Right lobe of liver (tissue), 6 donors: ENCODE measurements at regions of chr9 and their contacts with region 1.

Region 1: GRCh38 chr9:71614409-71615010 is 153.8 kb downstream of the CEMIP2 start:
- DNase-seq: no peak
- ATAC-seq: no peak
- H3K4me3 ChIP-seq: no peak overlapping the region
- H3K27ac ChIP-seq: no peak overlapping the region
- H3K4me1 ChIP-seq: no peaks in the 10 kb centered on the region
- H3K27me3 ChIP-seq: no peaks in the 10 kb centered on the region
- CTCF ChIP-seq: no peak
- POLR2A ChIP-seq: no peak

Region 2: GRCh38 chr9:71663931-71664459 is 49.5 kb after region 1 on chr9:
- intact Hi-C with region 1: no loop called
- DNase-seq: no peak
- ATAC-seq: no peak
- H3K4me3 ChIP-seq: no peak overlapping the region
- H3K27ac ChIP-seq: no peak overlapping the region
- H3K4me1 ChIP-seq: no peaks in the 10 kb centered on the region
- H3K27me3 ChIP-seq: no peaks in the 10 kb centered on the region
- CTCF ChIP-seq: no peak
- POLR2A ChIP-seq: no peak

Region 3: GRCh38 chr9:71768388-71769174 is 154.1 kb after region 1 on chr9 and contains the start of gene CEMIP2:
- intact Hi-C with region 1: loop called in 1 of 2 experiments (anchors 10 kb)
- DNase-seq: peak; percentile 94 to 96 (median 96)
- ATAC-seq: peak; percentile 69 to 87 (median 81)
- H3K4me3 ChIP-seq: peak within 1 kb of the TSS; percentile 69 to 91 (median 89)
- H3K27ac ChIP-seq: peak within 1 kb of the TSS; percentile 94 to 99 (median 98)
- H3K4me1 ChIP-seq: peaks cover 0 to 39% (median 11%) of the 10 kb centered on the region in 4 donors
- H3K27me3 ChIP-seq: no peaks in the 10 kb centered on the region
- CTCF ChIP-seq: peak; percentile 26 to 46 (median 41)
- POLR2A ChIP-seq: peak; percentile 97
- total RNA-seq, gene CEMIP2: 40.9 to 92.8 (median 56.5) TPM